HCT116 (cell line): ENCODE measurements at regions of chr20 and their contacts with region 1.

Region 1: DNA sequence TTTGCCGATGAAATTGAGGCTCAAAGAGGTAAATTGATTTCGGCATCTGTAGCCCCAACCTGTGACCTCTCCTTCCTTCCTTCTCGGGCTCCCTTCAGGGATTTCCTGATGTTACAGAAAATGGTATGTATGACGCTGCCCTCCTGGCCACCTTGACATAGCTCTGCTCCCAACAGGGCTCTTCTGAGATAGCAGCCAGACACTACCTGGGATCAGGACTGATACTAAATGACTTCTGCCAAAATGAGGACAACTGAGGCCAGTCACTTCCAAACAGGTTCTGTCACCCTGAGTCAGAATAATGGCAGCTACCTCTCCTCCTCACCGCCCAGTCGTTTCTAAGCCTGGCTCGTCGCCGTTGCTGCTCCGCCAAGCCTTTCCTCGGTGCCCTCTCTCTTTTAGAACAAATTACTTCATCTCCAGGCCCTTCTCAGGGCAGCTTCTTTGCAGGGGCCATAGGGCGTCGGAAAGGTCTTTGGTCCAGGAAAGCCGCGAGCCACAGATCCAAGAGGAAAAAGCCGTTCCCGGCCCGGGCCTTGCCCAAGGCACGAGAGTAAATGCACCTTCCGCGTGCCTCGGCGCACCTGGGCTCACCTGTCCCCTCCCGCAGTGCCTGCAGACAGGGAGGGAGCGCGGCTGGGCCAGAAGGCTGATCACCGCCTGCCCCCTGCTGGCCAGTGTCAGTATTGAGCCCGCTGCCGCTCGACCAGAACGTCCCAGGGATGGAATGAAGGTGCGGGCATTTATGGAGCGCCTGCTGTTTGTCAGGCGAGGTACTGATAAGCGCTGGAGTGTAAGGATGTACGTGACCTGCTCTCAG is 904 bp upstream of the LPIN3 start:
- DNase-seq: peak; percentile 76
- ATAC-seq: peak; percentile 84
- H3K4me3 ChIP-seq: peak overlapping the region; percentile 70 to 74
- H3K27ac ChIP-seq: no peak overlapping the region
- H3K4me1 ChIP-seq: peaks cover 6 to 21% of the 10 kb centered on the region in 2 experiments; a peak in 3 of 4 replicates
- H3K27me3 ChIP-seq: no peaks in the 10 kb centered on the region
- CTCF ChIP-seq: peak; percentile 93 to 96 (median 95)
- POLR2A ChIP-seq: no peak
- RAD21 ChIP-seq: peak; percentile 99

Region 2: DNA sequence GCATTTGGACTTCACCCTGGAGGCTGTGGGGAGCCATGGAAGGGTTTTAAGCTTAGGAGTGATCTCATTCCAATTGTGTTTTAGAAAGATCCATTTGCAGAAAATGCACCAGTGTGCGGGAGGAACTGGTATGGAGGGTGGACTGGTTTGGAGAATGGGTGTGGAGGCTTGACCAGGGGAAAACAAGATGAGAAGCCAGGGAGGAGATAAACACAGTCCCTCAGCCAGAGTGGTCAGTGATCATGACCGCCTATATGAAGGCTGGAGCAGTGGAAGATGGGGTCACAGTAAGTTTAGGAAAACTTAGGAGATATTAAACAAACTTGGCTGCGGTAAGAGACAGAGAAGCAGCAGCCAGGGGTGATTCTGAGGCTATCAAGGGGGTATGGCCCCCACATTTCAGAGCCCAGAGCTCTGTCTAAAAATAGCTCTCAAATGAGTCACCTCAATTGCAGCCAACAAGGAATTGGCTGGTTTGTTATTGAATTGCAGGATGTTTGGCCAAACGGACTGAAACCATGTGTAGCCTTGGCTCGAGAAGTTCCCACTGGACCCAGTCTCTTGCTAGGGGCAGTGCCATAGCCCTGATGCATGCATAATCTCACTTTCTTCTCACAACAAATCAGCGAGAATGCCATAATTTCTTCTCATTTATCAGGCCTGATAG is 471.0 kb before region 1 on chr20:
- CTCF ChIA-PET with region 1: no interaction called
- POLR2A ChIA-PET with region 1: no interaction called
- RAD21 ChIA-PET with region 1: no interaction called
- intact Hi-C with region 1: no loop called
- DNase-seq: no peak
- ATAC-seq: no peak
- H3K4me3 ChIP-seq: no peak overlapping the region
- H3K27ac ChIP-seq: no peak overlapping the region
- H3K4me1 ChIP-seq: peaks cover 7 to 14% of the 10 kb centered on the region in 2 experiments; a peak in 3 of 4 replicates
- H3K27me3 ChIP-seq: no peaks in the 10 kb centered on the region
- CTCF ChIP-seq: no peak
- POLR2A ChIP-seq: no peak
- RAD21 ChIP-seq: no peak

Region 3: GRCh38 chr20:41136680-41137613 is 202.8 kb before region 1 on chr20 and contains the start of gene PLCG1:
- CTCF ChIA-PET with region 1: interaction called, 53 read pairs
- POLR2A ChIA-PET with region 1: interaction called, 3 read pairs
- RAD21 ChIA-PET with region 1: interaction called, 5 to 9 read pairs
- intact Hi-C with region 1: loop called (anchors 1 kb)
- DNase-seq: peak; percentile 35
- ATAC-seq: peak; percentile 84
- H3K4me3 ChIP-seq: peak within 1 kb of the TSS; percentile 57 to 79
- H3K27ac ChIP-seq: peak within 1 kb of the TSS; percentile 85
- H3K4me1 ChIP-seq: peaks cover 9 to 20% of the 10 kb centered on the region in 2 experiments; a peak in 3 of 4 replicates
- H3K27me3 ChIP-seq: no peaks in the 10 kb centered on the region
- CTCF ChIP-seq: no peak
- POLR2A ChIP-seq: peak; percentile 21
- RAD21 ChIP-seq: no peak
- total RNA-seq, gene PLCG1: 45.6 TPM

Region 4: DNA sequence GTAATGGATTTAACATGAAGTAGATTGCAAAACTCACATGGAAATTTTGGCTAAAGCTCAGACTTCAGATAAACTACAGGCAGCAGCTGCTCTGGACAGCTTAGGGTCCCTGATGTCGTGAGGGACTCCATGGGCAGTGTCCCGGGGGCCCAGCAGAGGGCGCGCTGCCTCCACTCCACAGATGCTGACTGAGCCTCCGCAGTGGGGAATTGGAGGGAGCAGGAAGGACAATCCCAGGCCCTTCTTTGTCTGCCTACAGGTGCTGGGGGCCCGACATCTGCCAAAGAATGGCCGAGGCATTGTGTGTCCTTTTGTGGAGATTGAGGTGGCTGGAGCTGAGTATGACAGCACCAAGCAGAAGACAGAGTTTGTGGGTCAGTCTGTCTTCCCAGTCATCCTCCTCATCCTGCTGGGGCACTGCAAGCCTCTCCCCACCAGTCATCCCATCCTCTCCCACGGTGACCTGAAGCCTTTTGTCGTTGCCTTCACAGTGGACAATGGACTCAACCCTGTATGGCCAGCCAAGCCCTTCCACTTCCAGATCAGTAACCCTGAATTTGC is 166.5 kb before region 1 on chr20:
- CTCF ChIA-PET with region 1: interaction called, 83 read pairs
- POLR2A ChIA-PET with region 1: interaction called, 4 read pairs
- RAD21 ChIA-PET with region 1: interaction called, 7 to 17 read pairs
- intact Hi-C with region 1: loop called (anchors 1 kb)
- DNase-seq: peak; percentile 18
- ATAC-seq: peak; percentile 94
- H3K4me3 ChIP-seq: no peak overlapping the region
- H3K27ac ChIP-seq: no peak overlapping the region
- H3K4me1 ChIP-seq: peaks cover 3 to 15% of the 10 kb centered on the region in 2 experiments; a peak in 3 of 4 replicates
- H3K27me3 ChIP-seq: no peaks in the 10 kb centered on the region
- CTCF ChIP-seq: peak; percentile 83 to 98 (median 96)
- POLR2A ChIP-seq: no peak
- RAD21 ChIP-seq: peak; percentile 93

Region 5: DNA sequence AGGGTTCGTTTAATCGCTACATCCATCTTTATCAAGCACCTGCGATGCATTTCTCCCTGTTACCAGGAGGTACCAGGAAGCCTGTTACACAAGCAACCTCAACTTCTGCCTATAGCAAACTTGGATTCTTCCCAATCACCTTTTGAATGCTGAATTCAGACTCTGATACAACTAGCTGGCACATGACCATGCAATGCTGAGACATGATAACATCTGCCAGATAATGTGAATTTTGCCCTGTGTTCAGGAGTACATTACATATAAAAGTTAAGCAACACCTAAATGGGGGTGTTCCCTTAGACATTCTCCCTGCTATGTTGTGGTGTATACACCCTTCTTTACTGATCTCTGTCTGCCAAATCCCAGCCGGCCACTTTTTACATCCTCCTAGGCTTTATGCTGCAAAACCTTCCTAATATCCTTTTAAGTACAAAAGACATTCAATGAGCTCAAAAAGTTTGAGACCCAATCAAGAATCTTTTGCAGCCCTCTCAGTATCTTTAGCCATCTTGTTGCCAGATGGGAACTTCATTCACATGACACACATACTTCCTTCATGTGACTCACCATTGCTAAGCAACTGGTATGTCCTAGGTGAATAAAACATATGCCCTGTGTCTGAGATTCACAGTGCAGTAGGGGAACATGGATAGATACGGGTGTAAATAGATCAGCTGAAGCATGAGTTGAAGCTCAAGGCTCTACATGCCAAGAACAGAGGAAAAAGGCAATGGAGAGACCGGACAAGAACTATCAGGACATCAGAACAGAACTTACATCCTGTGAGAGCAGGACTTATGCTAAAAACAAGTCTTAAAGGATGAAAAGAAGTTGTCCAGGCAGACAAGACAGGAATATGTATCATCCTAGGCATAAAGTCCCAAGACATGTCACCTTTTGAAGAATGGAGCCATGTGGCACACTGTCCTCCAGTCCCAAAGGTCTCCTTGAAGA is 106.5 kb before region 1 on chr20:
- CTCF ChIA-PET with region 1: interaction called, 9 read pairs
- POLR2A ChIA-PET with region 1: no interaction called
- RAD21 ChIA-PET with region 1: no interaction called
- intact Hi-C with region 1: loop called (anchors 1 kb)
- DNase-seq: no peak
- ATAC-seq: peak; percentile 31
- H3K4me3 ChIP-seq: peak overlapping the region in 1 of 2 experiments; percentile 17; a peak in 1 of 4 replicates
- H3K27ac ChIP-seq: no peak overlapping the region
- H3K4me1 ChIP-seq: peaks cover 7 to 19% of the 10 kb centered on the region in 2 experiments
- H3K27me3 ChIP-seq: no peaks in the 10 kb centered on the region
- CTCF ChIP-seq: no peak
- POLR2A ChIP-seq: no peak
- RAD21 ChIP-seq: no peak

Region 6: DNA sequence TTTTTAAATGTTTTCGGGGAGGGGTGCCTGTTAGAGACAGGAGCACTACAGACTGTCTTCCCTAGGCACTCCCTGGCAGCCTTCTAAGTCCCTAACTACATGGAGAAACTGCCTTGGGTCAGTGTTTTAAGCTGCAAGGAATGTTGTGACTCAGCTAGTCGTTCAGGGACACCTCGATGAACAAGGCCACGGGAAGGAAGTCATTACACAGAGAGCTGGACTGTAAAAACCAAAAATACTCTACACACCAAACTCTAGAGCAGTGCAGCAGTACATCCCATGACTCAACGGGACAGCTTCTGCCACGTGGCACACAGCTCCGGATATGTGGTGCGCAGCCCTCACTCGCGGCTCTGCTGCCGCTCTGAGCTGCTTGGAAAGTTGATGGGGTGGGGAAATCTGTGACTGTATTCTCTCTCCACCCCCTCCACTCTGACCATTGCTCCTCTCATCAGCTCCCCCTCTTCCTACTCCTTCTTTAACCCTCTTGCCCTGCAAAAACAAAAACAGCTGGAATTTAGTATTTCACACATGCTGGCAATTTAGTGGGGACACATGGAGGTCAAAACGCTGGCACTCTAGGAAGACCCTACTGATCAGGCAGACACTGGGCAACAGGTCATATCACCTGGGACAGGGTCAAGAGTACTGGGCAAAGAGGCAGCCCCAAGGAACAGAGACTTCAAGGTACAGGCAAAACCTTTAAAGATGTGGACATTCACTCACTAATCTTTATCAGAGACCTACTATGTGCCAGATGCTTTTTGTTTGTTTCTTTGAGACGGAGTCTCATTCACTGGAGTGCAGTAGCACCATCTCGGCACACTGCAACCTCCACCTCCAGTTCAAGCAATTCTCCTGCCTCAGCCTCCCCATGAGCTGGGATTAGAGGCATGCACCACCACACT is 10.0 kb before region 1 on chr20:
- CTCF ChIA-PET with region 1: interaction called, 15 read pairs
- POLR2A ChIA-PET with region 1: no interaction called
- RAD21 ChIA-PET with region 1: no interaction called
- intact Hi-C with region 1: no loop called
- DNase-seq: peak; percentile 26
- ATAC-seq: peak; percentile 79
- H3K4me3 ChIP-seq: peak overlapping the region in 1 of 2 experiments; percentile 1; a peak in 1 of 4 replicates
- H3K27ac ChIP-seq: peak overlapping the region; percentile 37; the same call in 1 of the 2 replicates
- H3K4me1 ChIP-seq: peaks cover 7 to 19% of the 10 kb centered on the region in 2 experiments; a peak in 3 of 4 replicates
- H3K27me3 ChIP-seq: no peaks in the 10 kb centered on the region
- CTCF ChIP-seq: no peak
- POLR2A ChIP-seq: peak; percentile 71
- RAD21 ChIP-seq: no peak

Region 7: GRCh38 chr20:41443691-41444090 is 104.0 kb after region 1 on chr20:
- CTCF ChIA-PET with region 1: no interaction called
- POLR2A ChIA-PET with region 1: no interaction called
- RAD21 ChIA-PET with region 1: no interaction called
- intact Hi-C with region 1: no loop called
- DNase-seq: no peak
- ATAC-seq: no peak
- H3K4me3 ChIP-seq: no peak overlapping the region
- H3K27ac ChIP-seq: no peak overlapping the region
- H3K4me1 ChIP-seq: no peaks in the 10 kb centered on the region
- H3K27me3 ChIP-seq: no peaks in the 10 kb centered on the region
- CTCF ChIP-seq: no peak
- POLR2A ChIP-seq: no peak
- RAD21 ChIP-seq: no peak

Region 8: GRCh38 chr20:41524980-41525613 is 185.4 kb after region 1 on chr20:
- CTCF ChIA-PET with region 1: no interaction called
- POLR2A ChIA-PET with region 1: no interaction called
- RAD21 ChIA-PET with region 1: no interaction called
- intact Hi-C with region 1: no loop called
- DNase-seq: no peak
- ATAC-seq: no peak
- H3K4me3 ChIP-seq: no peak overlapping the region
- H3K27ac ChIP-seq: no peak overlapping the region
- H3K4me1 ChIP-seq: 0 out of 4 replicates have a peak, but pooled peaks cover 0 to 2% of the 10 kb centered on the region in 2 experiments
- H3K27me3 ChIP-seq: no peaks in the 10 kb centered on the region
- CTCF ChIP-seq: no peak
- POLR2A ChIP-seq: no peak
- RAD21 ChIP-seq: no peak

Region 9: DNA sequence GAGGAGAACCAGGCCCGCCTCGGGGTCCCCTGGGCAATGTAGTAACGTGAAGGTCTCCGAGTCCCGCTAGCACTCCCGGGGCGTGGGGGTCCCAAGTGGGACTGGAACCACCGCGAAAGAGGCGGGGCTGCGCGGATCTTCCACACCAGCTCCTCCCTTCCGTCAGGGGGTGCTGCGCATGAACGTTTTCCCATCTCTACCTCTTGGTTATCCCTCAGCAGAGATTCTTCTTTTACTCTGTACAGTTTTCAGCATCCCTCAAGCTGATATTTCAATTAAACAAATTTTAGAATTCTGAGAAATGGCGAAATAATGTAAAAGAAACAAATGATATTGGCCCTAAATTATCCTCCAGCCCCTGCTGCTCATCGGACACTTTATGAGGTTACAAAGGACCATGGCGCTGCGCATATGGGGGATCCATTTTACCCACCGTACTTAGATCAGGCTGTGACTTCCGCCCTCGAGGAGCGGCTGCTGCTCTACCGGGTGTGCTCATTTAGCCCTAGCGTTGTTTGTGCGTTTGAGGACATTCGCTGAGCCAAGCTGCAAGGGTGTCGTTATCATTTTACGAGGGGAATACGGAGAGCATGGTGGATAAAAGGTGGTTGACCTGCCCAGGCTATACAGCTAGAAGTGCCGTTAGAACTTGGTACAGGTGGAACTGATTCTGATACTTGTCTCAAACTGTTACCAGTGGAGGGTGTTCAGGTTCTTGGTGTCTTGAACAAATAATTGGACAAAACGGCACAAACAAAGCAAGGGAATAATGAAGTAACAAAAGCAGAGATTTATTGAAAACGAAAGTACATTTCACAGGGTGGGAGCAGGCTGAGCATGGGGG is 353.6 kb after region 1 on chr20:
- CTCF ChIA-PET with region 1: interaction called, 6 read pairs
- POLR2A ChIA-PET with region 1: no interaction called
- RAD21 ChIA-PET with region 1: no interaction called
- intact Hi-C with region 1: loop called (anchors 2 kb)
- DNase-seq: peak; percentile 90
- ATAC-seq: peak; percentile 90
- H3K4me3 ChIP-seq: peak overlapping the region; percentile 66 to 80
- H3K27ac ChIP-seq: peak overlapping the region; percentile 52
- H3K4me1 ChIP-seq: peaks cover 5 to 13% of the 10 kb centered on the region in 2 experiments; a peak in 3 of 4 replicates
- H3K27me3 ChIP-seq: no peaks in the 10 kb centered on the region
- CTCF ChIP-seq: peak; percentile 38 to 69 (median 41); a peak in 5 of 6 replicates
- POLR2A ChIP-seq: peak; percentile 77
- RAD21 ChIP-seq: no peak